Psoas muscle (tissue), 8 donors: ENCODE measurements at regions of chr14 and their contacts with region 1.

Region 1: GRCh38 chr14:38867561-38868150 is 235.4 kb downstream of the SEC23A start:
- DNase-seq: peak; percentile 41 to 53
- ATAC-seq: peak; percentile 81 to 92 (median 84)
- H3K4me3 ChIP-seq: no peak overlapping the region
- H3K27ac ChIP-seq: no peak overlapping the region
- H3K4me1 ChIP-seq: peaks cover 13% of the 10 kb centered on the region
- H3K27me3 ChIP-seq: no peaks in the 10 kb centered on the region
- CTCF ChIP-seq: peak; percentile 82

Region 2: DNA sequence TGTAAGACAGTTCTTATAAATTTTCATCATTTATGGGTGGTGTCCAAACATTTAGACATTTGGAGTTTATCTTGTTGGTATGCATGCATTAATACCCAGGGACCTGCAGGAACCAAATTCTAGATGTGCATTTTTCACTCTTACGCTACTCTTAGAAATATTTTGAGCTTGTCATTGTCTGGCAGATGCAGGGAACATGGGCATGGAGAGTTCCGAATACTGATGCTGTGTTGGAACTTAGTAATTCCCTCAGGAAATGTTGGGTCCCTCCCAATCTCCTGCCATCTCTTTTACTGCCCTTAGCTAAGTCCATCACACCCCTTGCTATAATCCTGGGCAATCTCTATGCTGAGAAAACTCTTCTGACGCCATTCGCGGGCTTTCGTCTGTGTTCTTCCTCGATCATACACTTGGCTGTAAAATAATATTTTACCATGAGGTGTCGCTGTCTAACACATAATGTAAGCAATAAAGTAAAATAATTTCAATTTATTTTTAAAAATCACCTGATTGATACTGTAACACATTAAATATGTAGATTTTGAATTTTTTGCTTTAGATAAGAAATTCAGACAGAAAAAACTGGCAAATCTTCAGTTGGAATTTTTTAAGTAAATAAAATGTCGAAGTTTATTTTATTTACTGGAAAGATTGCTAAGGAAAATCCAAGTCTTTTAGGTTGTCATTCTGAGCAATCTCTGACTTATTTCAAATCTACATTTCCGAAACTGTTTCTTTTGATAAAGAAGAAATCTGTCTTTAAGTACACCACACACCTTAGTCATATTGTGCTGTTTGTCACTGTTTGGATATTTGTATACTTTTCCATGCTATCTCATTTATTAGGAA is 964.1 kb before region 1 on chr14:
- intact Hi-C with region 1: loop called (anchors 1 to 5 kb)
- DNase-seq: no peak
- ATAC-seq: no peak
- H3K4me3 ChIP-seq: no peak overlapping the region
- H3K27ac ChIP-seq: no peak overlapping the region
- H3K4me1 ChIP-seq: no peaks in the 10 kb centered on the region
- H3K27me3 ChIP-seq: no peaks in the 10 kb centered on the region
- CTCF ChIP-seq: peak; percentile 67

Region 3: GRCh38 chr14:38721822-38722431 is 145.7 kb before region 1 on chr14:
- intact Hi-C with region 1: loop called in 1 of 2 experiments (anchors 5 kb)
- DNase-seq: peak; percentile 43 to 52
- ATAC-seq: peak; percentile 59 to 77 (median 64)
- H3K4me3 ChIP-seq: no peak overlapping the region
- H3K27ac ChIP-seq: no peak overlapping the region
- H3K4me1 ChIP-seq: peaks cover 5% of the 10 kb centered on the region
- H3K27me3 ChIP-seq: no peaks in the 10 kb centered on the region
- CTCF ChIP-seq: peak; percentile 75

Region 4: GRCh38 chr14:38731962-38732361 is 135.7 kb before region 1 on chr14:
- intact Hi-C with region 1: loop called in 1 of 2 experiments (anchors 5 kb)
- DNase-seq: no peak
- ATAC-seq: no peak
- H3K4me3 ChIP-seq: no peak overlapping the region
- H3K27ac ChIP-seq: no peak overlapping the region
- H3K4me1 ChIP-seq: no peaks in the 10 kb centered on the region
- H3K27me3 ChIP-seq: no peaks in the 10 kb centered on the region
- CTCF ChIP-seq: no peak

Region 5: DNA sequence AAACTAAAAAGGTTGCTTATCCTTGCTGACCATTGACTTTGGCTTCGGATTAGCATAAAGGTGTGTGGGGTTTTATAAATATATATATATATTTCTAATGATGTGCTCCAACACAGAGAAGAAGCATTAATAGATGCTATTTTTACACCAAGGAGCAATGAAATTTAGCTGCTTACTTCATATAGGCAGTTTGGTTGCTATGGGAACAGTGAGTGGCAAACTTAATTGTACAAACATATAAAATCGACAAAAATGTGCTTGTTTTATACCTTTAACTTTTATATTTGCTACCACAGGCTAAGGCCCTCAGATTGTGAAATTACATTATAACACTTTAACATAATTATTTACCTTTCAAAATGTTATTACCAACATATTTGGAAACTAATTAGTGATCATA is 68.0 kb before region 1 on chr14:
- intact Hi-C with region 1: no loop called
- DNase-seq: no peak
- ATAC-seq: no peak
- H3K4me3 ChIP-seq: no peak overlapping the region
- H3K27ac ChIP-seq: no peak overlapping the region
- H3K4me1 ChIP-seq: no peaks in the 10 kb centered on the region
- H3K27me3 ChIP-seq: no peaks in the 10 kb centered on the region
- CTCF ChIP-seq: no peak

Region 6: GRCh38 chr14:39614297-39614923 is 746.8 kb after region 1 on chr14:
- intact Hi-C with region 1: no loop called
- DNase-seq: no peak
- ATAC-seq: no peak
- H3K4me3 ChIP-seq: no peak overlapping the region
- H3K27ac ChIP-seq: no peak overlapping the region
- H3K4me1 ChIP-seq: peaks cover 3% of the 10 kb centered on the region
- H3K27me3 ChIP-seq: no peaks in the 10 kb centered on the region
- CTCF ChIP-seq: no peak